Activated B cell treated with CpG ODN at 0.5 μM for 24 hours (primary cell): ENCODE measurements at regions of chr5 and their contacts with region 1.

Region 1: GRCh38 chr5:170434966-170435605 is 45.9 kb upstream of the KCNMB1 start:
- DNase-seq: peak; percentile 39
- ATAC-seq: peak; percentile 70
- H3K4me3 Mint-ChIP-seq: no peak overlapping the region
- H3K27ac Mint-ChIP-seq: no peak overlapping the region
- H3K4me1 Mint-ChIP-seq: no peaks in the 10 kb centered on the region
- H3K27me3 Mint-ChIP-seq: peaks cover 16% of the 10 kb centered on the region
- CTCF ChIP-seq: peak; percentile 86

Region 2: DNA sequence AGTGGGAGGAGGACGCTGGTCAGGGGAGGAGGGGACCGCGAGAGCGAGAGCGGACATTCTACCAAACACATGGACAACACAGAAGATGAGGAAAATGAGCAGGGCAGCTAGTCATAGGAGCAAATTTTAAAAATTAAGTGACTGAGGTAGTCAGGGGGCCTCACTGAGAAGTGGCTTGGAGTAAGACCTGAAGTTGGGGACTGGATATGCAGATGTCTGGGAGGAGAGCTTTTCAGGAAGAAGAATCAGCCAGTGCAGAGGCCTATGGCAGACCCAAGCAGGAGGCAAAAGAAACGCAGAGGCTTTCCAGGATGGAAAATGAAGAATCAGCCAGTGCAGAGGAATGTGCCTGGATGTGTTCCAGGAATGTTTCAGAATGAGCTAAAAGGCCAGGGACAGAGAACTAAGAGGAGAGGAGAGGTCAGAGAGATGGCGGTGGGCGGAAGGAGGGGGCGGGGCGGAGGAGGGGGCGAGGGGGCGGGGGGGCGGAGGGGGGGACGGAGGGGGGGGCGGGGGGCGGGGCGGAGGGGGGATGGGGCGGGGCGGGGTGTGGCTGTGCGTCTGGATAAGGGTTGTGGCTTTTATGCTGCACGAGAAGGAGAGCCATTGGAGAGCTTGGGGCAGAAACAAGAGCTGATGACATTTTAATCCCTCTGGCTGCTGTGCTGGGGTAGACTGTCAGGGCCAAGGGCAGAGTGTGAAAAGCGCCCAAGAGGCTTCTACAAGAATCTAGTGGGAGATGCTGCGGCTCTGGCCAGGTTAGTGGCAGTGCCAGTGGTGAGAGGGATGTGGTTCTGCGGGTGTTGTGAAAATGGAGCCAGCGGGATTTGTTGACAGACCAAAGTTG is 198.4 kb after region 1 on chr5:
- CTCF ChIA-PET with region 1: interaction called, 4 read pairs
- POLR2A ChIA-PET with region 1: no interaction called
- intact Hi-C with region 1: loop called (anchors 1 kb)
- DNase-seq: no peak
- ATAC-seq: peak; percentile 28
- H3K4me3 Mint-ChIP-seq: peak overlapping the region; percentile 75
- H3K27ac Mint-ChIP-seq: no peak overlapping the region
- H3K4me1 Mint-ChIP-seq: peaks cover 15% of the 10 kb centered on the region
- H3K27me3 Mint-ChIP-seq: peaks cover 18% of the 10 kb centered on the region
- CTCF ChIP-seq: no peak